HepG2 (cell line): ENCODE measurements at regions of chr14 and their contacts with region 1.

Region 1: DNA sequence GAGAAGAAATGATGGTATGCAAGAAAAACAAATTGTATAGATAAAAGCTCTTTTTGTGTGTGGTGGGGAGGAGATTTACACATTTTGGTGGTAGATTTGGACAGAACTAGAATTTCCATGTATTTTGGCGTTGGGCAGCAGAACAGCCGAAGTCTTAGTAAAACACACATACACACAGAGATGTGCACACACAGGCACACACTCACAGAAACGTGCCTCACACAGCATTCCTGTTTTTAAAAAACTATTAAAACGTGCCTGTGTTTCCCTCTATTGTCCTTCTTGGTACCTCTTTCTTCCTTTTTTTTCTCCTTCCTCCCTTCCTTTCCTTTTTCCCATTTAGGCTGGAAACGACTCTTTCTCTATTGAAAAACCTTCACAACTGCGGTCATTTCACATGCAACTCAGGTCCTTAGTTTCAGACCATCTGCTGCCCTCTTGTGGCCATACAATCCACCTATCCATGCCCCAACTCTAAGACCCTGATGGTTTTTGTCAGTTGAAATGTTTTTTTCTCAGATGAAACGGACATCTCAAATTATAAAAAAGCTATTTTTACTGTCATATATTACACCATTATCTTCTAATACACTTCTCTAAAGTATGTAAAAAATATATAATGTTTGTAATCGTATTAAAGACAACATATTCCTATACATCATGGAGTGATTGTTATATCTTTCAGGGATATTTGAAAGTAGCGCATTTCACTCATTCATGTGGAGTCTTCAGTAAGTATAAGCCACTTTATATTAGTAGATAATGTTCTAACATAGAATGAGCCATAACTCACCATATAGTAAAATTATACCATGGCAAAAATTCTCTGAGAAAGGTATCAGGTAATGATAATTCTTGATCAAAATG is 386.7 kb upstream of the NOVA1 start:
- DNase-seq: peak; percentile 64
- ATAC-seq: peak; percentile 99
- H3K4me3 ChIP-seq: no peak overlapping the region
- H3K27ac ChIP-seq: no peak overlapping the region
- H3K4me1 ChIP-seq: no peaks in the 10 kb centered on the region
- H3K27me3 ChIP-seq: no peaks in the 10 kb centered on the region
- CTCF ChIP-seq: peak; percentile 79
- EP300 ChIP-seq: no peak
- POLR2A ChIP-seq: no peak
- RAD21 ChIP-seq: no peak

Region 2: GRCh38 chr14:26394150-26394810 is 590.3 kb before region 1 on chr14:
- CTCF ChIA-PET with region 1: no interaction called
- POLR2A ChIA-PET with region 1: no interaction called
- in situ Hi-C with region 1: no loop called
- intact Hi-C with region 1: loop called (anchors 1 kb)
- DNase-seq: no peak
- ATAC-seq: peak; percentile 56; the same call in 2 of the 3 replicates
- H3K4me3 ChIP-seq: no peak overlapping the region
- H3K27ac ChIP-seq: no peak overlapping the region
- H3K4me1 ChIP-seq: no peaks in the 10 kb centered on the region
- H3K27me3 ChIP-seq: no peaks in the 10 kb centered on the region
- CTCF ChIP-seq: no peak
- EP300 ChIP-seq: no peak
- POLR2A ChIP-seq: no peak
- RAD21 ChIP-seq: no peak

Region 3: DNA sequence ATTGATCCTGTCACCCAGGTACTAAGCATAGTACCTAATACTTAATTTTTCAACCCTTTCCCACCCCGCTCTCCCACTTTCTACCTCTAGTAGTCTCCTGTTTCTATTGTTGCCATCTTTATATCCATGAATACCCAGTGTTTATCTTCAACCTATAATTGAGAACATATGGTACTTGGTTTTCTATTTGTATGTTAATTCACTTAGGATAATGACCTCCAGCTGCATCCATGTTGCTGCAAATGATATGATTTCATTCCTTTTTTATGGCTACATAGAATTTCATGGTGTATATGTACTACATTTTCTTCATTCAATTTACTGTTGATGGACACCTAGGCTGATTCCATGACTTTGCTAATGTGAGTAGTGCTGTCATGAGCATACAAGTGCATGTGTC is 160.6 kb after region 1 on chr14:
- CTCF ChIA-PET with region 1: no interaction called
- POLR2A ChIA-PET with region 1: no interaction called
- in situ Hi-C with region 1: no loop called
- intact Hi-C with region 1: no loop called
- DNase-seq: no peak
- ATAC-seq: no peak
- H3K4me3 ChIP-seq: no peak overlapping the region
- H3K27ac ChIP-seq: no peak overlapping the region
- H3K4me1 ChIP-seq: no peaks in the 10 kb centered on the region
- H3K27me3 ChIP-seq: no peaks in the 10 kb centered on the region
- CTCF ChIP-seq: no peak
- EP300 ChIP-seq: no peak
- POLR2A ChIP-seq: no peak
- RAD21 ChIP-seq: no peak